Heart left ventricle (tissue), 16 donors: ENCODE measurements at regions of chr11 and their contacts with region 1.

Region 1: DNA sequence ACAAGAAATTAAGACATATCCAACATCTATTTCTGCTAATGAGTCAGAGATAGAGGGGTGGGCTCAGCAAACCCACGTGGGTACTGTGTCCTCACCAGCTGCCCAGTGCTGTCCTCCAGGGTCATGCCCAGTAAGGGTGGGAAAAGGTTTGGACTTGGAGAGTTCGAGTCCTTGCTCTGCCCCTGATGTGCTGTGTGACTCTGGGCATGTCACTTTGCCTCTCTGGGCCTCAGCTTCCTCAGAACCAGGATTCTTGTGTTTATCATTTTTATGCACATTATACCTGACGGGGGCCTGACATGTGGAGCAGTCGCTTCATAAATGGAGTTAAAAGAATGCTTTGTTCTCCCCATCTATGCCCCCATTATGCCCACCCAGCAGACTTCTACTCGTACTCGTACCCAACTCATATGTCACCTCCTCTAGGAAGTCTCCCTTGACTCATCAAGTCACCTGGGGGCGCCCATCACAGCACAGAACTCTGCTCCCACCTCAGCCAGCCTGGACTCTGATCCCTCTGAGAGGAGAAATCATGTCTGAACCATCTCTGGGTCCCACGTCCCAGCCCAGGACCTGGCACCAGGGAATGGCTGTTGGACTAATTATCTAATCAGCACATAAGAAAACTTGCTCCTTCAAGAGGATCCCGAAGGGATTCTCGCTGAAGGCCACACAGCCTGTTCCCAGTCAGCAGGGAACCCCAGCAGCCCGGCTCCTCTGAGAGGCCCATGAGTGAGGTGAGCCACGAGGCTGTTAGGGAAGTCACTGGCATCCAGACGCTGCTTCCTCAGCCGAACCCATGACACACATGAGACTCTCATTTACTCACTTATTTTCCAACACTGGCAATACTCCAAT is 38.7 kb upstream of the TSKU start:
- DNase-seq: no peak
- ATAC-seq: peak in 3 of 4 donors; percentile 31 to 54 (median 49)
- H3K4me3 ChIP-seq: no peak overlapping the region
- H3K27ac ChIP-seq: peak overlapping the region in 2 of 12 donors; percentile 34 to 46
- H3K4me1 ChIP-seq: peaks cover 0 to 38% (median 7%) of the 10 kb centered on the region in 12 donors
- H3K27me3 ChIP-seq: no peaks in the 10 kb centered on the region
- CTCF ChIP-seq: no peak
- POLR2A ChIP-seq: no peak

Region 2: GRCh38 chr11:76782526-76783293 is 38.3 kb after region 1 on chr11:
- intact Hi-C with region 1: loop called in 4 of 10 experiments (anchors 5 kb)
- DNase-seq: peak; percentile 87 to 93 (median 90)
- ATAC-seq: peak; percentile 65 to 86 (median 82)
- H3K4me3 ChIP-seq: peak overlapping the region; percentile 48 to 95 (median 86)
- H3K27ac ChIP-seq: peak overlapping the region; percentile 65 to 95 (median 88)
- H3K4me1 ChIP-seq: peaks cover 0 to 68% (median 20%) of the 10 kb centered on the region in 12 donors
- H3K27me3 ChIP-seq: peaks cover 0 to 23% (median 0%) of the 10 kb centered on the region in 9 donors
- CTCF ChIP-seq: peak in 1 of 12 donors; percentile 9
- POLR2A ChIP-seq: no peak

Region 3: DNA sequence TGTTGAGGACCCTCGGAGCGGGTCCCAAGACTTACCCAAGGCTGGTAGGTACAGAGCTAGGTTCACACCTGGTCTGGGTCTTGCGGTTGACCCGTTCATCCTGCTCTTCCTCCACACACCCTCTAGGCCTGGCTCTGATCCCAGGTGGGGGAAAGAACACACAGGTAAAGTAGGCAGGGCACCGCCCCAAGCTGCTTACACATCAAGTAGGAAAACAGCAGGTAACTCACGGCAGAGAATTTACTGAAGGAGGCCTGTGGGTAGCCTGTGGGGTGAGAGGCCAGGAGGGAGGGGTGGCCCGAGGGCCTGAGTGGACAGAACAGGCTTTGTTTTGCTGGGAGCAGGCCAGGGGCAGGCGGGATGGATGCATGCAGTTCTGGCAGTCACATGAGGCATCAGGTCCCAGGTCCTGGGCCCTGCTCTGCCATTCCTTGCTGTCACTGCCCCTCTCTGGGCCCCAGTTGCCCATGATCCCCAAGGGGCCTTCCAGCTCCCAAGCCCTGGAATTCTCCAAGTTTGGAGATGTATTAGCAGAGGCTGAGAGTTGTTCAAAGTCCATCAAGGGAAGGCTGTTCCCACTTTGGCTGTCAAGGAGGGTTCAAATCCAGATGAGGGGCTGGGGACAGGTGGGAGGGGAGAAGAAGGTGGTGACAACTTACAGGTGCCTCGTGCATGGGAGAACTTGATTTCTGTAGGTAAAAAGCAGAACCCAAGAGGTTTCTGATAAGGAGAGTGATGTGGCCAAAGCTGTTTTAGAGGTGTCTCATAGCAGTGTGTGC is 44.4 kb after region 1 on chr11:
- intact Hi-C with region 1: loop called in 4 of 10 experiments (anchors 5 kb)
- DNase-seq: peak in 3 of 5 donors; percentile 20 to 48 (median 39)
- ATAC-seq: peak in 1 of 4 donors; percentile 5
- H3K4me3 ChIP-seq: no peak overlapping the region
- H3K27ac ChIP-seq: peak overlapping the region in 4 of 12 donors; percentile 15 to 28 (median 22)
- H3K4me1 ChIP-seq: peaks cover 0 to 77% (median 29%) of the 10 kb centered on the region in 12 donors
- H3K27me3 ChIP-seq: peaks cover 0 to 14% (median 0%) of the 10 kb centered on the region in 9 donors
- CTCF ChIP-seq: no peak
- POLR2A ChIP-seq: no peak

Region 4: GRCh38 chr11:76799066-76799804 is 54.8 kb after region 1 on chr11:
- intact Hi-C with region 1: no loop called
- DNase-seq: peak; percentile 88 to 93 (median 88)
- ATAC-seq: peak; percentile 62 to 93 (median 91)
- H3K4me3 ChIP-seq: peak overlapping the region in 10 of 12 donors; percentile 16 to 47 (median 42)
- H3K27ac ChIP-seq: peak overlapping the region in 6 of 12 donors; percentile 0 to 63 (median 26)
- H3K4me1 ChIP-seq: peaks cover 0 to 27% (median 9%) of the 10 kb centered on the region in 12 donors
- H3K27me3 ChIP-seq: no peaks in the 10 kb centered on the region
- CTCF ChIP-seq: peak in 11 of 12 donors; percentile 85 to 99 (median 95)
- POLR2A ChIP-seq: peak in 1 of 2 donors; percentile 37